Activated B cell treated with CpG ODN at 0.5 μM for 24 hours (primary cell): ENCODE measurements at regions of chr9 and their contacts with region 1.

Region 1: DNA sequence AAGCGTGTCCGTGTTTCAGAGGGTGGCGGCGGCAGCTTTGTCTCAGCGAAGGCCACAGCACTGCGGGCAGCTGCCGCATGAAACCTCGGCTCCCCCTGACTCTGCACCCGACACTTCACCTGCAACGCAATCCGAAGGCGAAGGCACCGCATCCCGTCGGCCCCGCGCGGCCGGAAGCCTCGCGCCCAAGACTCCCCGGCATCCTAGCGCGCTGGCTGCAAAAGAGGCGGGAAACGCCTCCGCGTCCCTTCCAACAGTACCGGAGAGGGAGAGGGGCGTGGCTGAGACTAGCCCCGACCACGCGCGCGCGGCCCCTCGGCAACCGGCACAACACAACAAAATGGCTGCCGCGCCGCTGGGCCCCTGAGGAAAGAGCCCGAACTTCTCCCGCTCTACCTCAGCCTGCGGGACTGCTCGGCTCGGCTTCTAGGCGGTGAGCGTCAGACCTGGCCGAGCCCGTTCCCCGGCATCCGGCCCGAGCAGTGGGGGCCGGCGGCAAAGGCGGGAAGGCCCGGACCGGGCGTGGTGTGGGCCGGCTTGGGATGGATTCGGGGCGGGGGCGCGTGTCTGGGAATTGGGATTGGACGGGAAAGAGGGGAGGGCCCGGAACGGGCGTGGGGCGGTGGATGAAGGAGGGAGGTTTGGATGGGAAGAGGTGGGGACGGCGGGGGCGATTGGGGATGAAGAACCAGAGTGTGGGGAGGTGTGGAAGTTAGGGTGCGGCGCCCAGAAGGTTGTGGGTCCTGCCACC is at the start of gene CNTRL:
- DNase-seq: peak; percentile 77
- ATAC-seq: peak; percentile 68
- H3K4me3 Mint-ChIP-seq: peak within 1 kb of the TSS; percentile 96
- H3K27ac Mint-ChIP-seq: peak within 1 kb of the TSS; percentile 98
- H3K4me1 Mint-ChIP-seq: peaks cover 75% of the 10 kb centered on the region
- H3K27me3 Mint-ChIP-seq: no peaks in the 10 kb centered on the region
- CTCF ChIP-seq: no peak
- total RNA-seq, gene CNTRL: 98.4 and 110 TPM in 2 replicates

Region 2: DNA sequence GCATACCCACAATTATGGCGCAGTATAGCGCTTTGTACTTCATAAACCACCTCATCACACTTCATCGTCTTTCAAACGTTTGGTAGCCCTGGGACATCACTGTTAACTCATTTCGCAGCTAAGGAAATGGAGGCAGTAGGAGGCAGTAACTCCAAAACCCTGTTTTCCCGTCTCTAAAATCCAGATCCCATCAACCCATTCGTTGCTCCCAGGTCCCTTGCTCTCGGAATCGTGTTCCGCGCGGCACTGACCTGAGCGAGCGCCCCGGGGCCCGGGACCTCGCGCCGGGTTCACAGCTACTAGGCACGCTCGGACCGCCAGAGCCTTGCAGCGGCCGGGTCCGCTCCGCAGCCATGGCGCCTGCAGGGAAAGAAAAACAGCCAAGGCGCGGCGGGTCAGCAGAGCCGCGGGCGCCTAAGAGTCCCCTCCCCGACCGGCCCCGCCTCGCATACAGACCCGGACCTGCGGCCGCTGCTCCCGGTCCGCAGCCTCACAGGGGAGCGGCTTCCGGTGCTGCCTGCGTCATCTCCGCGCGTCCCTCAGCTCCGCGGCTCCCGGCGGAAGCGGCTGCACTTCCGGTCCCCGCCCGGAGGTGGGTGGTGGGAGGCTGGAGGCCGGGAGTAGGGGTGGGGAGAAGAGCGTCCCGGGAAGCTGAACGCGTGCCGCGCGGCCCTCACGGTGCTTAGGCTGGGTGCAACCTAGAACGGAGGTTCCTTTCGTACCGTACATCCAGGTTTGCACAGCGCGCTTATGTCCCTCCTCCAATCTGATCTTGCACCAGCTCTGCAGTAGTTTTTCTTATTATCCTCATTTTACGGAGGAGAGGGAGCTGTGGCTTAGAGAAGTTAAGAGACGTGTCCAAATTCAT is 281.7 kb before region 1 on chr9 and contains the start of gene FBXW2:
- CTCF ChIA-PET with region 1: interaction called, 3 read pairs
- POLR2A ChIA-PET with region 1: interaction called, 7 read pairs
- intact Hi-C with region 1: loop called (anchors 2 kb)
- DNase-seq: peak; percentile 87
- ATAC-seq: peak; percentile 91
- H3K4me3 Mint-ChIP-seq: peak within 1 kb of the TSS; percentile 91
- H3K27ac Mint-ChIP-seq: peak within 1 kb of the TSS; percentile 89
- H3K4me1 Mint-ChIP-seq: peaks cover 38% of the 10 kb centered on the region
- H3K27me3 Mint-ChIP-seq: no peaks in the 10 kb centered on the region
- CTCF ChIP-seq: no peak
- total RNA-seq, gene FBXW2: 70.4 and 77.9 TPM in 2 replicates

Region 3: DNA sequence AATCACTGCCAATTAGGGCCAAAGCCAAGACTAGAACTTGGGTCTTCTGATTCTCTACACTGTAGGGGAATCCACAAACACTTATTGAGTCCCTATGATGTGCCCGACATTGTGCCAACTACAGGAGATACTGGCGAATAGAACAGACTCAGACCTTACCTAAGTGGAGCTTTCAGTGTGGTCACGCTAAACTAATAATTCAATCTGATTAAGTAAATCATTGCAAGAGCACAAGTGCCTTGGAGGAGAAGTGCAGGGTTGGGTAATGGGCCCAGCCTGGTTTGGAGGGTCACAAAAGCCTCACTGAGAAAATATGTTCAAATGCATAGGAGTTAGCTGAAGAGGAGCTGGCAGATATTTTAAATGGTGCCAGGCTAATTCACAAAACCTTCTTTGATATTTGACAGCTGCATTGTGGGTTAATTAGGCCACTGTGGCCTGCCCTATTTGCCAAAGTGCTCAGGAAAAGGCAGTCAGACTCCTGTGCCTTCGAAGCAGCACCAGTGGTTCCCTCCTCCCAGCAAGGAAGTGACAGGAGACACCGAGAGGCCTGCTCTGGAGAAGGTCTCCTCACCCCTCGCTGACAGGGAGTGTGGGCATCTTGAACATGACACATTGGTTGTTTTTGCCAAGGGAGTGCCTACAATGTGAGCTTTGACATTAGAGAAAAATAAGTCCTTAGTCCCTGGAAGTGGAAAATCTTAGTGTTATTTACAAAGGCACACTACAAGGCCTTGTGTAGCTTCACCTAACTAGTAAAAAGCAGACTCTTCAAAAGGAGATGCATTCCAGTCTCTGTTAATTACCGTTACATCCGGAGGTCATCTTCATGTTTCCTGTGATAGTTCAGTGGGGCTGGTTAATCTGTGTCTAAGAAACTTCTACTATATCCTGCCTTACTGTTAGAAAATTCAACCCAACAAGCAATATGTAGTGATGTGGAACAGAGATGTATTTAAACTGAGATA is 124.1 kb before region 1 on chr9:
- CTCF ChIA-PET with region 1: no interaction called
- POLR2A ChIA-PET with region 1: interaction called, 12 read pairs
- intact Hi-C with region 1: no loop called
- DNase-seq: no peak
- ATAC-seq: no peak
- H3K4me3 Mint-ChIP-seq: no peak overlapping the region
- H3K27ac Mint-ChIP-seq: no peak overlapping the region
- H3K4me1 Mint-ChIP-seq: peaks cover 2% of the 10 kb centered on the region
- H3K27me3 Mint-ChIP-seq: no peaks in the 10 kb centered on the region
- CTCF ChIP-seq: no peak

Region 4: DNA sequence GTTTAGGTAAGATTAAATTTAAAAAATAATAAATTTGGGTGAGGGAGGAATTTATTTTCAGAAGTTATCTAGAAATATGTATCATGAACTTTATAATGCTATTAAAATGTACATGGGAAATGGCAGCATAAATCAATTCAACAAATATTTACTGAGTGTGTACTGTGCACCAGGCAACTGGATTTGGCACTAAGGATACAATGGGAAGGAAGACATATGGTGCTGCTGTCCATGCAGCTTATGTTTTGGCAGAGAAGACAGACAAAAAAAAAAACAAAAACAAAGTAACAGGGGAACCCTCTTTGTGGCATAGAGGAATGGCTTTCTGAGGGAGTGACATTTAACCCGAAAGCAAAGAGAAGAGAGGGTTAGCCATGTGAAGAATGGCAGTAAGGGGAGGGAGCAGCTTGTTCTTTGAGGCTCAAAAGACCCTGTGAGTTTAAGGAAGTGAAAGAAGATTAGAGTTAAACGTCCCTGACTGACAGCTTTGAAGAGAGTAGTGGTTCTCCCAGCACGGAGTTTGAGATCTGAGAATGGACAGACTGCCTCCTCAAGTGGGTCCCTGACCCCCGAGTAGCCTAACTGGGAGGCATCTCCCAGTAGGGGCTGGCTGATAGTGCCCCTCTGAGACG is 23.9 kb after region 1 on chr9:
- CTCF ChIA-PET with region 1: no interaction called
- POLR2A ChIA-PET with region 1: interaction called, 8 read pairs
- intact Hi-C with region 1: loop called (anchors 2 kb)
- DNase-seq: no peak
- ATAC-seq: peak; percentile 99
- H3K4me3 Mint-ChIP-seq: peak overlapping the region; percentile 50
- H3K27ac Mint-ChIP-seq: peak overlapping the region; percentile 75
- H3K4me1 Mint-ChIP-seq: peaks cover 25% of the 10 kb centered on the region
- H3K27me3 Mint-ChIP-seq: no peaks in the 10 kb centered on the region
- CTCF ChIP-seq: no peak

Region 5: DNA sequence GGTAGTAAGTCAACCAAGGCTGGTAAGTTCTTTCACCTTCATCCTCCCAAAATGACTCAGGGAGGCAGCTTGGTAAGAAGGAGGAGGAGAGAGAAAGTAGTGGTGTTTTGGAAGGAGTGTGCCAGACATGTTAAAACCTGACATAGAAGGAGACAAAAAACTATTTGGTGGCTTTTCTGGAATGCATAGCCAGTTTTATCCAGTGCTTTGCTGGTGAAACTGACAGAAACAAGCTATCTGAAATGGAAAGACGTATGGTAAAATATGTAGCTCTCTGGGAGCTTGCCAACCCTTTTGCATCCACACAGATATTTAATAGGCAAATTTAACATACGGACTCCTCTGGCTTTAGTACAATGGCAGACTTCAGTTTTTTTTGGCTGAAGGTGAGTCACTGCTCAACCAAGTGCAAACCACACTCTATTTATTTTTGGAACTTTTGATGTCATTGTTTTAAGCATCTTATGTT is 81.5 kb after region 1 on chr9:
- CTCF ChIA-PET with region 1: interaction called, 3 read pairs
- POLR2A ChIA-PET with region 1: interaction called, 5 read pairs
- intact Hi-C with region 1: loop called (anchors 1 kb)
- DNase-seq: no peak
- ATAC-seq: peak; percentile 87
- H3K4me3 Mint-ChIP-seq: peak overlapping the region; percentile 67
- H3K27ac Mint-ChIP-seq: peak overlapping the region; percentile 92
- H3K4me1 Mint-ChIP-seq: peaks cover 67% of the 10 kb centered on the region
- H3K27me3 Mint-ChIP-seq: no peaks in the 10 kb centered on the region
- CTCF ChIP-seq: no peak

Region 6: DNA sequence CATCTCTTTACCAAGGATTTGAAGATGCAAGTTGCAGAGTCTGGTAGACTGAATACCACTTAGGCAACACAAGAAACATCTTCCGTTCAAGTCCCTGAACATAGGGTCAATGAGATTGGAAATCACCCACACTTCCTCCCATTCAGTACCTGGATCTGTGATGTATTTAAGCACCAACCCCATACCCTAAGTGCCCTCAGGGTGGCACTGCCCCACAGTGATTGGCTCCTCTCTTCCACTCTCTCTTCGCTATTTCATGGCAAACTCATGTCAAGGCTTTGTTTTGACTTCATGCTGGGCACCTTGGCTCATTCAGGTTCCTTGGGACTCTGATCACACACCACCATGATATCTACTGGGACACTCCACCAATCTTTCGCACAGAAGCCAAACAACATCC is 371.2 kb after region 1 on chr9:
- CTCF ChIA-PET with region 1: no interaction called
- POLR2A ChIA-PET with region 1: no interaction called
- intact Hi-C with region 1: no loop called
- DNase-seq: no peak
- ATAC-seq: no peak
- H3K4me3 Mint-ChIP-seq: no peak overlapping the region
- H3K27ac Mint-ChIP-seq: no peak overlapping the region
- H3K4me1 Mint-ChIP-seq: no peaks in the 10 kb centered on the region
- H3K27me3 Mint-ChIP-seq: peaks cover 16% of the 10 kb centered on the region
- CTCF ChIP-seq: no peak